B cell (primary cell): ENCODE measurements at regions of chr3 and their contacts with region 1.

Region 1: GRCh38 chr3:70550723-70551319 is 238.4 kb upstream of the MDFIC2 start:
- DNase-seq: peak; percentile 72
- ATAC-seq: peak; percentile 45
- H3K4me3 ChIP-seq: no peak overlapping the region
- H3K4me3 Mint-ChIP-seq: no peak overlapping the region
- H3K27ac ChIP-seq: no peak overlapping the region
- H3K27ac Mint-ChIP-seq: no peak overlapping the region
- H3K4me1 ChIP-seq: no peaks in the 10 kb centered on the region
- H3K4me1 Mint-ChIP-seq: no peaks in the 10 kb centered on the region
- H3K27me3 ChIP-seq: no peaks in the 10 kb centered on the region
- H3K27me3 Mint-ChIP-seq: no peaks in the 10 kb centered on the region
- CTCF ChIP-seq: peak; percentile 76

Region 2: DNA sequence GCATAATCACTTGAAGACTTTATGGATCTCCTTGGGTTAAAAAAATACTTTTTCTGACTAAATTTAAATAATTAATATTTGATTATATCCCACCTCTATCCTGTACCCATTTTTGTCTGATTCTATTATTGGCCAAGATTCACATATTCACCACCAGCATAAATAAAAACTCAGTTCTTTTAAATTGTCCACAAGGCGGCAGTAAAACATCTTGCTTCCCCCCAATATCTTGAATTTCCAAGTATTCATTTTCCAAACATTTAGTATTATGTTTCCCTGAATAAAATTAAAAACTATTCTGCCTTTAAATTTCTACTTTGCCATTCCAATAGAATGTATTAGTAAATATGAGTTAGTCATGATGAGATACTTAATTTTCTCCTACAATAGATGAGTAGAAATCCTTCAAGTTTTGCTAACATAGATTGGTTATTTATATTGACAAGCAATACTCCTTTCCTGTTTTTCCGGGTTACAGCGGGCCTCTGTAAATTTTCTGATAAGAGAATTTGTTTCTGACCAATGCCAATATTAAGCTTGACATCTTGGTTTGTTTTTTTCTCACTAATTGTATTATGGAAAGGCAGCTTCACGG is 19.7 kb before region 1 on chr3:
- CTCF ChIA-PET with region 1: interaction called, 13 read pairs
- POLR2A ChIA-PET with region 1: no interaction called
- intact Hi-C with region 1: no loop called
- DNase-seq: peak; percentile 10
- ATAC-seq: no peak
- H3K4me3 ChIP-seq: no peak overlapping the region
- H3K4me3 Mint-ChIP-seq: no peak overlapping the region
- H3K27ac ChIP-seq: no peak overlapping the region
- H3K27ac Mint-ChIP-seq: no peak overlapping the region
- H3K4me1 ChIP-seq: no peaks in the 10 kb centered on the region
- H3K4me1 Mint-ChIP-seq: no peaks in the 10 kb centered on the region
- H3K27me3 ChIP-seq: no peaks in the 10 kb centered on the region
- H3K27me3 Mint-ChIP-seq: peaks cover 4% of the 10 kb centered on the region
- CTCF ChIP-seq: peak; percentile 61

Region 3: GRCh38 chr3:70597312-70597711 is 46.5 kb after region 1 on chr3:
- CTCF ChIA-PET with region 1: no interaction called
- POLR2A ChIA-PET with region 1: no interaction called
- intact Hi-C with region 1: no loop called
- DNase-seq: no peak
- ATAC-seq: no peak
- H3K4me3 ChIP-seq: no peak overlapping the region
- H3K4me3 Mint-ChIP-seq: no peak overlapping the region
- H3K27ac ChIP-seq: no peak overlapping the region
- H3K27ac Mint-ChIP-seq: no peak overlapping the region
- H3K4me1 ChIP-seq: no peaks in the 10 kb centered on the region
- H3K4me1 Mint-ChIP-seq: no peaks in the 10 kb centered on the region
- H3K27me3 ChIP-seq: peaks cover 0 to 4% (median 0%) of the 10 kb centered on the region in 4 experiments
- H3K27me3 Mint-ChIP-seq: peaks cover 17% of the 10 kb centered on the region
- CTCF ChIP-seq: no peak

Region 4: GRCh38 chr3:71305231-71306206 is 754.7 kb after region 1 on chr3:
- CTCF ChIA-PET with region 1: interaction called, 6 read pairs
- POLR2A ChIA-PET with region 1: no interaction called
- intact Hi-C with region 1: loop called (anchors 10 kb)
- DNase-seq: peak; percentile 49
- ATAC-seq: peak; percentile 60
- H3K4me3 ChIP-seq: peak overlapping the region; percentile 50 to 85 (median 67)
- H3K4me3 Mint-ChIP-seq: peak overlapping the region; percentile 88
- H3K27ac ChIP-seq: peak overlapping the region; percentile 70 to 84
- H3K27ac Mint-ChIP-seq: peak overlapping the region; percentile 94
- H3K4me1 ChIP-seq: peaks cover 47 to 57% of the 10 kb centered on the region in 2 donors
- H3K4me1 Mint-ChIP-seq: peaks cover 77% of the 10 kb centered on the region
- H3K27me3 ChIP-seq: no peaks in the 10 kb centered on the region
- H3K27me3 Mint-ChIP-seq: no peaks in the 10 kb centered on the region
- CTCF ChIP-seq: no peak

Region 5: GRCh38 chr3:71652781-71653413 is 1102.1 kb after region 1 on chr3:
- CTCF ChIA-PET with region 1: interaction called, 58 read pairs
- POLR2A ChIA-PET with region 1: no interaction called
- intact Hi-C with region 1: no loop called
- DNase-seq: peak; percentile 69
- ATAC-seq: peak; percentile 45
- H3K4me3 ChIP-seq: no peak overlapping the region
- H3K4me3 Mint-ChIP-seq: no peak overlapping the region
- H3K27ac ChIP-seq: no peak overlapping the region
- H3K27ac Mint-ChIP-seq: no peak overlapping the region
- H3K4me1 ChIP-seq: peaks cover 0 to 3% of the 10 kb centered on the region in 2 donors
- H3K4me1 Mint-ChIP-seq: peaks cover 3% of the 10 kb centered on the region
- H3K27me3 ChIP-seq: no peaks in the 10 kb centered on the region
- H3K27me3 Mint-ChIP-seq: peaks cover 6% of the 10 kb centered on the region
- CTCF ChIP-seq: peak; percentile 80

Region 6: DNA sequence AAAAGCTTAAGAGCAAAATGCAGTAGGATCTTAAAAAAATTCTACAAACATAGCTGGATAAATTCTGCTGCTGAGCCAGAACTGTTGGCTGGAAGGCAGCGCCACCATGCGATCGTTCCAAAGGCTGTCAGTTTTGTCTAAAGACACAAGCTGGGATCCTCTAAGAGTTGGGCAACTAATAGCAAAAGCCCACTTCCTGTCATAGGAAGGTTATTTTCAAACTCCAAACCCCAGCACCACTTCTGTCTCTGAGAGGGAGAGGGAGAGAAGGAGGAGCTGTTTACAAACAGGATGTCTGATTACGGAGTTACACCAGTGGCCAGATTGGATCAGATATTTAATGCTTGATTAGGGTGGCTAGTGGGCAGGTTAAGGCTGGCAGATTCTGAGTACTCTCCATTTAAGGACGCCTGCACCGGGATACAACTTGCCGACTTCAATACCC is 1130.4 kb after region 1 on chr3:
- CTCF ChIA-PET with region 1: interaction called, 14 read pairs
- POLR2A ChIA-PET with region 1: no interaction called
- intact Hi-C with region 1: no loop called
- DNase-seq: peak; percentile 12
- ATAC-seq: no peak
- H3K4me3 ChIP-seq: no peak overlapping the region
- H3K4me3 Mint-ChIP-seq: no peak overlapping the region
- H3K27ac ChIP-seq: no peak overlapping the region
- H3K27ac Mint-ChIP-seq: no peak overlapping the region
- H3K4me1 ChIP-seq: no peaks in the 10 kb centered on the region
- H3K4me1 Mint-ChIP-seq: no peaks in the 10 kb centered on the region
- H3K27me3 ChIP-seq: no peaks in the 10 kb centered on the region
- H3K27me3 Mint-ChIP-seq: peaks cover 9% of the 10 kb centered on the region
- CTCF ChIP-seq: peak; percentile 56